ENCODE measurements at regions of chr1 and their contacts with region 1.

Region 1: GRCh38 chr1:32448773-32449456 is 16.0 kb upstream of the ZBTB8B start:
- DNase-seq: peak; percentile 61 to 87 (median 72)
- ATAC-seq: peak; percentile 96
- H3K4me3 ChIP-seq: no peak overlapping the region
- H3K27ac ChIP-seq: peak overlapping the region; percentile 18; the same call in 2 of the 3 replicates
- H3K4me1 ChIP-seq: peaks cover 0 to 4% of the 10 kb centered on the region in 2 experiments; a peak in 3 of 5 replicates
- H3K27me3 ChIP-seq: peaks cover 20 to 21% of the 10 kb centered on the region in 2 experiments; a peak in 4 of 5 replicates
- CTCF ChIP-seq: peak; percentile 85 to 87 (median 87)
- EP300 ChIP-seq: no peak
- POLR2A ChIP-seq: no peak
- RAD21 ChIP-seq: peak; percentile 49 to 69

Region 2: GRCh38 chr1:32031578-32032274 is 417.2 kb before region 1 on chr1:
- CTCF ChIA-PET with region 1: no interaction called
- POLR2A ChIA-PET with region 1: no interaction called
- in situ Hi-C with region 1: no loop called
- intact Hi-C with region 1: no loop called
- DNase-seq: no peak
- ATAC-seq: no peak
- H3K4me3 ChIP-seq: no peak overlapping the region
- H3K27ac ChIP-seq: no peak overlapping the region
- H3K4me1 ChIP-seq: no peaks in the 10 kb centered on the region
- H3K27me3 ChIP-seq: no peaks in the 10 kb centered on the region
- CTCF ChIP-seq: no peak
- EP300 ChIP-seq: no peak
- POLR2A ChIP-seq: no peak
- RAD21 ChIP-seq: no peak

Region 3: DNA sequence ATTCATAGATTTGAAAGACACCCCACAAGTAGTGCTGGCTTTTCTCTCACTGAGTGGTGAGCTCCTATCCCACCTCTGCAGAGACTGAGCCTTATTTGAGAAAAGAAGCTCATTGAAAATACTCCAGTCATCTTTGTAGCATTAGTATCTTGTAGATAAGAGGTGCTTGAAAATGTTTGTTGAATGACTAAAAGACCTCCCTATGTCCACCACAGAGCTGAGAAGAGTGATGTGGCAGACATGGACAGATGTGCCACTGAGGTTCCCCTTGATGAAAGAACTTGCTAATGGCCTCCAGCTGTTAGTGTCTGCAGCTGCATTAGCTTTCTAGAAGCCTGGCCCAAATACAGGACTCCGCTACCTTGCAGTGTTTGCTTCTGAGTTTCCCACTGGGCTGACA is 61.0 kb after region 1 on chr1:
- CTCF ChIA-PET with region 1: no interaction called
- POLR2A ChIA-PET with region 1: no interaction called
- in situ Hi-C with region 1: no loop called
- intact Hi-C with region 1: no loop called
- DNase-seq: no peak
- ATAC-seq: no peak
- H3K4me3 ChIP-seq: no peak overlapping the region
- H3K27ac ChIP-seq: no peak overlapping the region
- H3K4me1 ChIP-seq: no peaks in the 10 kb centered on the region; a peak in 1 of 5 replicates
- H3K27me3 ChIP-seq: peaks cover 6 to 26% of the 10 kb centered on the region in 2 experiments; a peak in 4 of 5 replicates
- CTCF ChIP-seq: no peak
- EP300 ChIP-seq: no peak
- POLR2A ChIP-seq: no peak
- RAD21 ChIP-seq: no peak

Region 4: DNA sequence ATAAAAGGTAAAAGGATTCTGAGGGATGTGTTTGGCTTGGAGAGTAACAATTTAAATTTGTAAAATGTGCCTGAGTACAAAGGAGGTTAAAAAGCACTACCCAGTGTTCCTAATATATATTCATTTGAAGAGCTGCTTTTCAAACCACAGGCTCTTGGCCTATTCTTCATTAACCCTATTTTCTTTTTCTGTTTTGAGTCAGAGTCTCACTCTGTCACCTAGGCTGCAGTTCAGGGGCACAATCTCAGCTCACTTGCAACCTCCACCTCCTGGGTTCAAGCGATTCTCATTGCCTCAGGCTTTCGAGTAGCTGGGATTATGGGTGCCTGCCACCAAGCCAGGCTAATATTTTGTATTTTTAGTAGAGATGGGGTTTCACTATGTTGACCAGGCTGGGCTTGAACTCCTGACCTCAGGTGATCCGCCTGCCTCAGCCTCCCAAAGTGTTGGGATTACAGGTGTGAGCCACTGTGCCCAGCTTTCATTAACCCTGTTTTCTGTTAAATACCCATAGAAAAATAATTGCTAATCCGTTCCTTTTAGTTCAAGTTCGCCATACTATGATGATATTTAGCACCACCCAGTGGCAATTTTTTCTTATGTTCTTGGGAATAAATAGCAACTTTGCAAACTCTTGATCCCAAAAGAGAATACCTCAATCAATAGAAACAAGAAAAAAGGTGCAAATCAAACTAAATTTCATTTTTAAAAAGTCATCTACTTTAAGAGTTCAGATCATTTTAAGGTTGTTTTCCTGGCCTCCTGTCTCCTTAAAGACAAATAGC is 171.0 kb after region 1 on chr1:
- CTCF ChIA-PET with region 1: no interaction called
- POLR2A ChIA-PET with region 1: no interaction called
- in situ Hi-C with region 1: no loop called
- intact Hi-C with region 1: loop called (anchors 2 kb)
- DNase-seq: no peak
- ATAC-seq: no peak
- H3K4me3 ChIP-seq: no peak overlapping the region
- H3K27ac ChIP-seq: no peak overlapping the region
- H3K4me1 ChIP-seq: no peaks in the 10 kb centered on the region; a peak in 1 of 5 replicates
- H3K27me3 ChIP-seq: no peaks in the 10 kb centered on the region
- CTCF ChIP-seq: peak in 2 of 3 experiments; percentile 3 to 43; a peak in 3 of 6 replicates
- EP300 ChIP-seq: no peak
- POLR2A ChIP-seq: no peak
- RAD21 ChIP-seq: peak; percentile 40

Region 5: DNA sequence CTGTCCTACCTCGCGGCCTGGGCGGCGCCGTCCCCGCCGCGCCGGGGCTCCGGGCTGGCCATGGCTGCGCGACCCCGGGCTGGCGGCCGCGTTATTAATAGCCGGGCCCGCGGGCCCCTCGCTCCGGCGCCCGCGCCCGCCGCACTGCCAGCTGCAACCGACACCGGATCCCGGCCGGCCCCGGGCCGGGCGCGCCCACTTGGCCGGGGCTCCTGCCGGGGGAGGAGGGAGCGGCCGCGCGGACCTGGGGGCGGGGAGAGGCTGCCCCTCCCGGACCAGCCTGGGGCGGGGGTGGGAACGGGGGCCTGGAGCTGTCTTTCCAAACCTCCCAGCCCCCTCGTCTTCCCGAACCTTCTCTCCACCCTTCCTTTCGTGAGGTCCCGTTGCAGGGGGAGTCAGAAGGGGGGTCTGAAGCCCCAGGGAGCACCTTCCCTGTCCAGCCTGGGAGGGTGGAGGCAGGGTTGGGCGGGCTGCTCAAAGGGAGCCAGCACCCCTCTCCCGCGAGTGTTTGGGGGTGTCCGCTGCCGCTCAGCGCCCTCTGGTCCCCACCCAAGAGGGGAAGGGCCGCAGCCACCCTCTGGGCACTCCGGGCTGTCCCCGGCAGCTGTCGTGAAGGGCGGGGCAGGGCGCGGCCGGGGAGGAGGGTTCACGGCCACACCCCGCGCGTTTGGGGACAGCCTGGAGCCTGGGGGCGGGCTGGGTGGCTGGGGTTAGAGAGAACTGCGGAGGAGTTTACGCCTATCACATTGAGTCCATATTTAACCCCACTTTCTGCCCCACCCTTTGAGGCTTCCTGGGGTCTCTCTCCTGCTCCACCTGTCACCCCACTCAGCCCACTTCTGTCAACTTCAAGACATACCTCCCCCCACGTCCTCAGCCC is 253.9 kb after region 1 on chr1 and contains the start of gene SYNC:
- CTCF ChIA-PET with region 1: no interaction called
- POLR2A ChIA-PET with region 1: no interaction called
- in situ Hi-C with region 1: no loop called
- intact Hi-C with region 1: loop called (anchors 5 kb)
- DNase-seq: peak; percentile 92 to 99 (median 96)
- ATAC-seq: peak; percentile 97
- H3K4me3 ChIP-seq: peak within 1 kb of the TSS; percentile 59
- H3K27ac ChIP-seq: peak within 1 kb of the TSS; percentile 49; the same call in 2 of the 3 replicates
- H3K4me1 ChIP-seq: peaks cover 9 to 30% of the 10 kb centered on the region in 2 experiments; a peak in 4 of 5 replicates
- H3K27me3 ChIP-seq: no peaks in the 10 kb centered on the region
- CTCF ChIP-seq: no peak; a peak in 1 of 6 replicates
- EP300 ChIP-seq: no peak; the same call in 1 of the 2 replicates
- POLR2A ChIP-seq: peak; percentile 61
- RAD21 ChIP-seq: no peak
- polyA plus RNA-seq, gene SYNC: 0.49 to 0.74 TPM

Region 6: GRCh38 chr1:32870615-32871363 is 421.9 kb after region 1 on chr1 and contains the start of gene FNDC5:
- CTCF ChIA-PET with region 1: no interaction called
- POLR2A ChIA-PET with region 1: no interaction called
- in situ Hi-C with region 1: no loop called
- intact Hi-C with region 1: loop called (anchors 2 kb)
- DNase-seq: peak; percentile 37 to 86 (median 72)
- ATAC-seq: peak; percentile 80
- H3K4me3 ChIP-seq: peak within 1 kb of the TSS; percentile 28
- H3K27ac ChIP-seq: no peak within 1 kb of the TSS
- H3K4me1 ChIP-seq: peaks cover 5 to 16% of the 10 kb centered on the region in 2 experiments; a peak in 4 of 5 replicates
- H3K27me3 ChIP-seq: peaks cover 4 to 20% of the 10 kb centered on the region in 2 experiments; a peak in 3 of 5 replicates
- CTCF ChIP-seq: no peak
- EP300 ChIP-seq: no peak
- POLR2A ChIP-seq: no peak
- RAD21 ChIP-seq: no peak
- polyA plus RNA-seq, gene FNDC5: 0.06 to 0.10 TPM